Naive thymus-derived CD4-positive, alpha-beta T cell (primary cell): ENCODE measurements at regions of chr1 and their contacts with region 1.

Region 1: GRCh38 chr1:244047621-244048471 is 3.2 kb upstream of the ZBTB18 start:
- DNase-seq: peak; percentile 85 to 98 (median 97)
- ATAC-seq: peak; percentile 87
- H3K4me3 ChIP-seq: peak overlapping the region; percentile 61
- H3K4me3 Mint-ChIP-seq: peak overlapping the region; percentile 86 to 96 (median 96)
- H3K27ac ChIP-seq: peak overlapping the region; percentile 96
- H3K27ac Mint-ChIP-seq: peak overlapping the region; percentile 97 to 100 (median 98)
- H3K4me1 ChIP-seq: peaks cover 6 to 23% of the 10 kb centered on the region in 2 donors
- H3K4me1 Mint-ChIP-seq: peaks cover 13 to 39% (median 33%) of the 10 kb centered on the region in 7 donors
- H3K27me3 ChIP-seq: no peaks in the 10 kb centered on the region
- H3K27me3 Mint-ChIP-seq: peaks cover 0 to 43% (median 0%) of the 10 kb centered on the region in 5 donors

Region 2: GRCh38 chr1:243421784-243422183 is 626.1 kb before region 1 on chr1:
- CTCF ChIA-PET with region 1: no interaction called
- POLR2A ChIA-PET with region 1: no interaction called
- intact Hi-C with region 1: loop called in 1 of 2 experiments (anchors 5 kb)
- DNase-seq: peak in 8 of 9 donors; percentile 13 to 58 (median 39)
- ATAC-seq: peak; percentile 87
- H3K4me3 ChIP-seq: peak overlapping the region; percentile 6
- H3K4me3 Mint-ChIP-seq: peak overlapping the region; percentile 5 to 80 (median 62)
- H3K27ac ChIP-seq: no peak overlapping the region
- H3K27ac Mint-ChIP-seq: peak overlapping the region in 5 of 9 donors; percentile 1 to 81 (median 17)
- H3K4me1 ChIP-seq: peaks cover 9% of the 10 kb centered on the region in 2 donors
- H3K4me1 Mint-ChIP-seq: peaks cover 12 to 42% (median 22%) of the 10 kb centered on the region in 7 donors
- H3K27me3 ChIP-seq: no peaks in the 10 kb centered on the region
- H3K27me3 Mint-ChIP-seq: no peaks in the 10 kb centered on the region

Region 3: GRCh38 chr1:243568793-243569192 is 479.1 kb before region 1 on chr1:
- CTCF ChIA-PET with region 1: no interaction called
- POLR2A ChIA-PET with region 1: no interaction called
- intact Hi-C with region 1: no loop called
- DNase-seq: no peak
- ATAC-seq: no peak
- H3K4me3 ChIP-seq: no peak overlapping the region
- H3K4me3 Mint-ChIP-seq: no peak overlapping the region
- H3K27ac ChIP-seq: no peak overlapping the region
- H3K27ac Mint-ChIP-seq: no peak overlapping the region
- H3K4me1 ChIP-seq: no peaks in the 10 kb centered on the region
- H3K4me1 Mint-ChIP-seq: peaks cover 0 to 4% (median 0%) of the 10 kb centered on the region in 7 donors
- H3K27me3 ChIP-seq: no peaks in the 10 kb centered on the region
- H3K27me3 Mint-ChIP-seq: no peaks in the 10 kb centered on the region

Region 4: GRCh38 chr1:243968413-243968812 is 79.4 kb before region 1 on chr1:
- CTCF ChIA-PET with region 1: no interaction called
- POLR2A ChIA-PET with region 1: interaction called, 3 read pairs
- intact Hi-C with region 1: loop called in 1 of 2 experiments (anchors 5 kb)
- DNase-seq: no peak
- ATAC-seq: no peak
- H3K4me3 ChIP-seq: no peak overlapping the region
- H3K4me3 Mint-ChIP-seq: no peak overlapping the region
- H3K27ac ChIP-seq: no peak overlapping the region
- H3K27ac Mint-ChIP-seq: no peak overlapping the region
- H3K4me1 ChIP-seq: no peaks in the 10 kb centered on the region
- H3K4me1 Mint-ChIP-seq: peaks cover 0 to 1% (median 0%) of the 10 kb centered on the region in 7 donors
- H3K27me3 ChIP-seq: no peaks in the 10 kb centered on the region
- H3K27me3 Mint-ChIP-seq: peaks cover 0 to 6% (median 0%) of the 10 kb centered on the region in 5 donors

Region 5: GRCh38 chr1:244065960-244066388 is 18.1 kb after region 1 on chr1:
- CTCF ChIA-PET with region 1: interaction called, 3 read pairs
- POLR2A ChIA-PET with region 1: interaction called, 17 read pairs
- intact Hi-C with region 1: no loop called
- DNase-seq: no peak
- ATAC-seq: no peak
- H3K4me3 ChIP-seq: no peak overlapping the region
- H3K4me3 Mint-ChIP-seq: no peak overlapping the region
- H3K27ac ChIP-seq: no peak overlapping the region
- H3K27ac Mint-ChIP-seq: no peak overlapping the region
- H3K4me1 ChIP-seq: no peaks in the 10 kb centered on the region
- H3K4me1 Mint-ChIP-seq: peaks cover 0 to 24% (median 14%) of the 10 kb centered on the region in 7 donors
- H3K27me3 ChIP-seq: no peaks in the 10 kb centered on the region
- H3K27me3 Mint-ChIP-seq: peaks cover 0 to 11% (median 0%) of the 10 kb centered on the region in 5 donors

Region 6: DNA sequence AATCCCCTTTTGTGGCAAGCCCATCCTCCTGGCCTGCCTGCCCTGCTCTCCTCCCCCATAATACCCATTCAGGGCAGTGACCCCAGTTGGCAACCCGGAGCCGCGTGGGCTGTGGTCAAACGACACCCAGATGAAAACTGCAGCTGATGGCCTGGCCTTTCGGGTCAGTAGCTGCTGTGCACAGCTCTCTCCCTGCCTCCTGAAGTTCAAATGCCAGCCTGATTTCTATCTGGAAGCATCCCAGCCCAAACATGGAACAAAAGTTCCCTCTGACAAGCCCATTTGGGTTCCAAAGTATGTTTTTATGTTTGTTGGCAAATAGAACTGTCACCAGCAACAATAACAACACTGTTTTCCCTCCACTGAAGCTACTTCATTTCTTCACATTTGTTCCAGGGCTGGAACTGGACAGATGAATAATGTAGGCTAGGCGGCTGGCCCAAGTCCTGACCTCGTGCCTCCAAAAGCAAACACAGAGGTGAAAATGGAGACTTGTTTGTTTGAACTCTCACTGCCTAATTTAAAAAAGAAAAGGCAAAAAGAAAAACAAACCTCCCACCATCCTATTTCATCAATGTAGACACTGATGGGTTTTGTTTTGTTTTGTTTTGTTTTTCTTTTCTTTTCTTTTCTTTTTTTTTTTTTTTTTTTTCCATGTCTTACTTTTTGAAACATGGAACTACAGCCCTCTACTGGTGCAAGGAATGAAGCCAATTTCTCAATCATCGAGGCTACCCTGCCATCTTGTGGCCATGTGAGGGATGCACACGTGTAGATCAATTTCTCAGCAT is 224.8 kb after region 1 on chr1:
- CTCF ChIA-PET with region 1: interaction called, 3 read pairs
- POLR2A ChIA-PET with region 1: interaction called, 3 read pairs
- intact Hi-C with region 1: loop called (anchors 1 kb)
- DNase-seq: peak; percentile 42 to 80 (median 73)
- ATAC-seq: peak; percentile 98
- H3K4me3 ChIP-seq: no peak overlapping the region
- H3K4me3 Mint-ChIP-seq: no peak overlapping the region
- H3K27ac ChIP-seq: no peak overlapping the region
- H3K27ac Mint-ChIP-seq: peak overlapping the region in 3 of 9 donors; percentile 0 to 45 (median 37)
- H3K4me1 ChIP-seq: no peaks in the 10 kb centered on the region
- H3K4me1 Mint-ChIP-seq: peaks cover 3 to 17% (median 12%) of the 10 kb centered on the region in 7 donors
- H3K27me3 ChIP-seq: no peaks in the 10 kb centered on the region
- H3K27me3 Mint-ChIP-seq: peaks cover 0 to 1% (median 0%) of the 10 kb centered on the region in 5 donors

Region 7: DNA sequence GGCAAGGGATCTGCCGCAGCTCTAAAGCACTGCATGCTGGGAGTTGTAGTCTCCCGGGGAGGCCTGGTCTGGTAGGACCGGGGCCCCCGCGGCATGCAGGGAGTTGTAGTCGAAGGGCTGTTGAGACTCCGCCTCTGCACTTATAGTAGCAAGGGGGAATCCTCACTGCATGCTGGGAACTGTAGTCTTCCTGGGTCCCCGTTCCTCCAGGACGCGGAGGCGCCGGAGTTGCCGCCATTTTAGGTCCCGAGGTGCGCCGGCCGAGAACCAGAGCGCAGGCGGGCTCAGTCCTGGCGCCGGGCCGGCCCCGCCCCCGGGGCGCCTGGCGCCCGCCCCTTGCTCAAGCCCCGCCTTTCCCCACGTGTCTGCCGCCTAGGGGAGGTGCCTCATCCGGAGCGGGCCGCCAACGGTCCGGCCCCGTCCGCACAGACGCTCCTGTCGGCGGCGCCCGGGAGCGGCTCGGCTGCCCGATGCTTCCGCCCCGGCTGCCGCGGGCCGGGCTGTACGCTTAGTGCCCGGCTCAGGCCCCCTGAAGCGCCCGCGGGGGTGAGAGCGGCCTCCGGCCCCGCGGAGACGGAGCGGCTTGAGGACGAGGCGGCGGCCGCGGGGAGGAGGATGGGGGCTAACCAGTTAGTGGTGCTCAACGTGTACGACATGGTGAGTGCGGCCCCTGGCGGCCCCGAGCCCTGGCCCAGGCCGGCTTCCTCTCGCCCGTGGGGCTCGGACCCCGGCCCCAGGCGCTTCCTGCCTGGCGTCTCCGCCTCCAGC is 605.0 kb after region 1 on chr1 and contains the start of gene DESI2:
- CTCF ChIA-PET with region 1: no interaction called
- POLR2A ChIA-PET with region 1: no interaction called
- intact Hi-C with region 1: loop called in 1 of 2 experiments (anchors 1 kb)
- DNase-seq: peak; percentile 95 to 100 (median 98)
- ATAC-seq: peak; percentile 95
- H3K4me3 ChIP-seq: peak within 1 kb of the TSS; percentile 75
- H3K4me3 Mint-ChIP-seq: peak within 1 kb of the TSS in 9 of 10 donors; percentile 83 to 91 (median 88)
- H3K27ac ChIP-seq: peak within 1 kb of the TSS; percentile 87
- H3K27ac Mint-ChIP-seq: peak within 1 kb of the TSS; percentile 81 to 96 (median 90)
- H3K4me1 ChIP-seq: peaks cover 19 to 24% of the 10 kb centered on the region in 2 donors
- H3K4me1 Mint-ChIP-seq: peaks cover 19 to 33% (median 21%) of the 10 kb centered on the region in 7 donors
- H3K27me3 ChIP-seq: no peaks in the 10 kb centered on the region
- H3K27me3 Mint-ChIP-seq: no peaks in the 10 kb centered on the region
- total RNA-seq, gene DESI2: 13.0 to 23.4 (median 17.6) TPM